ENCODE measurements at regions of chr13 and their contacts with region 1.

Region 1: GRCh38 chr13:98022210-98022609 is 68.7 kb downstream of the IPO5 start:
- DNase-seq: peak in 1 of 2 donors; percentile 39
- ATAC-seq: peak; percentile 67 to 87 (median 84)
- H3K4me3 ChIP-seq: no peak overlapping the region
- H3K27ac ChIP-seq: peak overlapping the region in 6 of 10 donors; percentile 2 to 61 (median 38)
- H3K4me1 ChIP-seq: peaks cover 0 to 23% (median 17%) of the 10 kb centered on the region in 9 donors
- H3K27me3 ChIP-seq: no peaks in the 10 kb centered on the region
- CTCF ChIP-seq: no peak

Region 2: DNA sequence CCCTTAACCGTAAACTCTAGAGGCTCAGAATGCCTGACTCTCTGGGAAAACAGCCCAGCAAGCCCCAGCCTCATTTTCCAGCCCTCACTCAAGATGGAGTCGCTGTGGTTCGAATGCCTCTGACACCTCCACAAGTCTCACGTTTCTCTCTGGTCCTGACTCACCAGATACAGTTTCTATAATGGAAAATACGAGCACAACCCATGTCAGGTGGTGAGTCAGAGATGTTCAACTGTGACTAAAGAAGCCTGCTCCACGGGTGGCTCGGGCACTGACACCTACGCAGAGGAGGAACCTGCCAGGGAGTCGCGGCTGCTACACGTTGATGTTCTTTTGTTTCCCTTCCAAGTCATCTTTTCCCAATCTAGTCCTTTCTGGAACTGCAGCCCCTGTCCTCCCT is 641.8 kb after region 1 on chr13:
- intact Hi-C with region 1: loop called in 1 of 10 experiments (anchors 10 kb)
- DNase-seq: no peak
- ATAC-seq: no peak
- H3K4me3 ChIP-seq: no peak overlapping the region
- H3K27ac ChIP-seq: no peak overlapping the region
- H3K4me1 ChIP-seq: no peaks in the 10 kb centered on the region
- H3K27me3 ChIP-seq: no peaks in the 10 kb centered on the region
- CTCF ChIP-seq: no peak

Region 3: GRCh38 chr13:98672944-98673545 is 650.8 kb after region 1 on chr13:
- intact Hi-C with region 1: loop called in 2 of 10 experiments (anchors 10 kb)
- DNase-seq: peak; percentile 45 to 72
- ATAC-seq: peak; percentile 89 to 96 (median 92)
- H3K4me3 ChIP-seq: peak overlapping the region in 1 of 10 donors; percentile 9
- H3K27ac ChIP-seq: peak overlapping the region in 2 of 10 donors; percentile 20 to 29
- H3K4me1 ChIP-seq: peaks cover 0 to 18% (median 11%) of the 10 kb centered on the region in 9 donors
- H3K27me3 ChIP-seq: no peaks in the 10 kb centered on the region
- CTCF ChIP-seq: peak; percentile 75 to 95 (median 88)

Measured in heart right ventricle (tissue), 16 donors.